ENCODE measurements at regions of chr2 and their contacts with region 1.

Region 1: DNA sequence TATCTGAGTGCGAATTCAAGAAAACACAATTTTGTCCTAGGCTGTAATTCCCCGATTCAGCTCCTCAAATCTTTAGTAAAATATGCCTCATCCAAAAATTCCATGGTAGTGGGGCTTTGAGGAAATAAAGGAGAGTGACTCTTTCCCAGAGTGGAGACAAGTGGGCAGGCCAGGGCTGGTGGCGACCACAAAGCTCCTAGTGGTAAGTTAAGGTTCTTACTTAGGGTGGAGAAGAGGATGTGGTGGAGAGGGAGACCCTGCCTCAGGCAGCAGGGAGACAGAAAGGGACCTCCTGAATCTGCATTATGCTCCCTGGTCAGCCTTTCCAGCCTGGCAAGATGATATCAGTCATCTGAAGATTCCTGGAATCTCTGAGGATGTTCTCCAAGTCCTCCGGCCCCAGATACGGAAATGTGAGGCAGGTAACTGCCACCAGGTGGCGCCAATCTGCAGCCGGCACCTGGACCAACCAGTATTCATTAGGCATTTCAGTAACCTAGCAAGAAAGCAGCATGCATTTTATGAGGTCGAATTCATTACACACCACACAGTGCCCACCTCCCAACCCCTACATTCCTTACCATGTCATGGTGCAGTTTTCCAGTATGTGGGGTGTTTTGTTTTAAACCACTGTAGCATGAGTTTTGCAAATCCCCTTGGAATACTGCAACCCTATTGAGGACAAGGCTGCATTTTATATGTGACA is 106.4 kb downstream of the POLE4 start:
- DNase-seq: peak; percentile 59
- ATAC-seq: peak; percentile 49
- H3K4me3 Mint-ChIP-seq: no peak overlapping the region
- H3K27ac Mint-ChIP-seq: no peak overlapping the region
- H3K4me1 Mint-ChIP-seq: peaks cover 8% of the 10 kb centered on the region
- H3K27me3 Mint-ChIP-seq: peaks cover 2% of the 10 kb centered on the region

Region 2: GRCh38 chr2:75035444-75036353 is 29.1 kb before region 1 on chr2:
- CTCF ChIA-PET with region 1: no interaction called
- POLR2A ChIA-PET with region 1: no interaction called
- DNase-seq: no peak
- ATAC-seq: no peak
- H3K4me3 Mint-ChIP-seq: no peak overlapping the region
- H3K27ac Mint-ChIP-seq: no peak overlapping the region
- H3K4me1 Mint-ChIP-seq: peaks cover 11% of the 10 kb centered on the region
- H3K27me3 Mint-ChIP-seq: no peaks in the 10 kb centered on the region

Region 3: GRCh38 chr2:75053484-75054112 is 11.2 kb before region 1 on chr2:
- CTCF ChIA-PET with region 1: interaction called, 12 read pairs
- POLR2A ChIA-PET with region 1: no interaction called
- DNase-seq: peak; percentile 26
- ATAC-seq: no peak
- H3K4me3 Mint-ChIP-seq: no peak overlapping the region
- H3K27ac Mint-ChIP-seq: no peak overlapping the region
- H3K4me1 Mint-ChIP-seq: peaks cover 4% of the 10 kb centered on the region
- H3K27me3 Mint-ChIP-seq: no peaks in the 10 kb centered on the region

Region 4: GRCh38 chr2:75076088-75076487 is 11.2 kb after region 1 on chr2:
- CTCF ChIA-PET with region 1: interaction called, 14 read pairs
- POLR2A ChIA-PET with region 1: no interaction called
- DNase-seq: no peak
- ATAC-seq: no peak
- H3K4me3 Mint-ChIP-seq: no peak overlapping the region
- H3K27ac Mint-ChIP-seq: no peak overlapping the region
- H3K4me1 Mint-ChIP-seq: no peaks in the 10 kb centered on the region
- H3K27me3 Mint-ChIP-seq: no peaks in the 10 kb centered on the region

Measured in activated CD8-positive, alpha-beta T cell treated with anti-CD3 and anti-CD28 coated beads, Interleukin-2, amount 10 ng/mL, durations not matched to agents 7 days and 5 days (primary cell).